IMR-90 (cell line): ENCODE measurements at regions of chr7 and their contacts with region 1.

Region 1: DNA sequence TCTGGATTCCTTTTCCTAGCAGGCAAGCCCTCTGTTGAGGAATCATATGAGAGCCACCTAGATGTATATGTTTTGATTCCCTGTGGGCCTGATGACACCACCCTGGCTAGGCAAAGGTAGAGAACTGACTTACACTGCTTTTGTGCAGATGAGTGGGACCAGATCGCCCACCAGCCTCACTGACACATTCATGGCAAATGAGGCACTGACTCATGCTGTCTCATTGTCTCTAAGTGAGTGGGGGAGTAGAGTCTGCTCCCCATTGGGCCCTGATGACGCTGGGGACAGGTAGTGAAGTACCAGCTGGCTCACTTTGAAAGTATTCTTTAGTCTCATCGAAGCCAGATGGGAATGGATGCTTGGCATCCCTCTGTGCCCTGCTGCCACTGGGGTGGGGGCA is 326.3 kb downstream of the ABCA13 start:
- DNase-seq: no peak
- ATAC-seq: no peak
- H3K4me3 ChIP-seq: no peak overlapping the region
- H3K27ac ChIP-seq: no peak overlapping the region
- H3K4me1 ChIP-seq: no peaks in the 10 kb centered on the region
- H3K27me3 ChIP-seq: no peaks in the 10 kb centered on the region
- CTCF ChIP-seq: no peak
- POLR2A ChIP-seq: no peak
- RAD21 ChIP-seq: no peak

Region 2: DNA sequence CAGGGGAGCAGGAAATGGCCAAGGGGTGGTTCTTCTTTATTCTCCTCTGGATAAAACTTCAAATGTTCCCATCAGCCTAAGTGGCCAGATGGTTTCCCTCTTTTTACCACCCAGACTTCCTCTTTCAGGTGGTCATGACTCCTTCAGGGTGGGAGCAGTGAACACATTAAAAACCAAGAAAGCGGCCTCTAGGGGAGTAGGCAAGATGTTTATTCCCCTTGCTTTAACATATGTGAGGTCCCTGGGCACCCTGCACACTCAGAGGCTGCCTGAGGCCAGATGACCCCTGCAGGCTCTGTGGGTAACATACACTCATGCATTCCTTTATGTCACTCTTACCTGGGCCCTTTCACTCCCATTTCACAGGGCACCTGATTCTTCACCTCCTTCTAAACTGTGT is 31.1 kb after region 1 on chr7:
- CTCF ChIA-PET with region 1: no interaction called
- POLR2A ChIA-PET with region 1: no interaction called
- dilution Hi-C with region 1: no loop called
- in situ Hi-C with region 1: no loop called
- intact Hi-C with region 1: no loop called
- DNase-seq: no peak
- ATAC-seq: no peak
- H3K4me3 ChIP-seq: no peak overlapping the region
- H3K27ac ChIP-seq: no peak overlapping the region
- H3K4me1 ChIP-seq: no peaks in the 10 kb centered on the region
- H3K27me3 ChIP-seq: no peaks in the 10 kb centered on the region
- CTCF ChIP-seq: no peak
- POLR2A ChIP-seq: no peak
- RAD21 ChIP-seq: no peak

Region 3: GRCh38 chr7:48540746-48541145 is 43.2 kb after region 1 on chr7:
- CTCF ChIA-PET with region 1: no interaction called
- POLR2A ChIA-PET with region 1: no interaction called
- dilution Hi-C with region 1: no loop called
- in situ Hi-C with region 1: no loop called
- intact Hi-C with region 1: no loop called
- DNase-seq: no peak
- ATAC-seq: no peak
- H3K4me3 ChIP-seq: no peak overlapping the region
- H3K27ac ChIP-seq: no peak overlapping the region
- H3K4me1 ChIP-seq: no peaks in the 10 kb centered on the region
- H3K27me3 ChIP-seq: no peaks in the 10 kb centered on the region
- CTCF ChIP-seq: no peak
- POLR2A ChIP-seq: no peak
- RAD21 ChIP-seq: no peak

Region 4: DNA sequence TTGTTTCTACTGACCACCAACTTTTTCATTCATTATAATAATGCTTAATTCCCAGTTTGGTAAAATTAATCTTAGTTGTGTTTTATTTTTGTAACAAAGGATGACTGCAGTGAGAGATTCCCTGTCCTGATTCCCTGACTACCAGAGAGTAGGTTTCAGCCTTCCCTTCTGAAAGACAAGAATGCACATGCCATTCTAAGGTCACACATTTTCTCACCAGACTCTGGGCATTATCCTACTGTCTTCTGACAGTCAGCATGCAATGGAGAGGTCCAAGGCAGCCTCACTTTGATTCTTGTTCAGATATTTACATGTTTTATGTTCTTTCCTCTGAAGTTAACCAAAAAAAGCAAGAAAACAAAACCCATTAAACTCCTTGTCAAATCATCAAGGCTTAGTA is 54.1 kb after region 1 on chr7:
- CTCF ChIA-PET with region 1: no interaction called
- POLR2A ChIA-PET with region 1: no interaction called
- dilution Hi-C with region 1: no loop called
- in situ Hi-C with region 1: no loop called
- intact Hi-C with region 1: loop called (anchors 10 kb)
- DNase-seq: no peak
- ATAC-seq: no peak
- H3K4me3 ChIP-seq: no peak overlapping the region
- H3K27ac ChIP-seq: no peak overlapping the region
- H3K4me1 ChIP-seq: no peaks in the 10 kb centered on the region
- H3K27me3 ChIP-seq: no peaks in the 10 kb centered on the region
- CTCF ChIP-seq: no peak
- POLR2A ChIP-seq: no peak
- RAD21 ChIP-seq: no peak